ENCODE measurements at regions of chr5 and their contacts with region 1.

Region 1: GRCh38 chr5:146474065-146474464 is 26.9 kb downstream of the TCERG1 start:
- DNase-seq: no peak
- CTCF ChIP-seq: no peak

Region 2: DNA sequence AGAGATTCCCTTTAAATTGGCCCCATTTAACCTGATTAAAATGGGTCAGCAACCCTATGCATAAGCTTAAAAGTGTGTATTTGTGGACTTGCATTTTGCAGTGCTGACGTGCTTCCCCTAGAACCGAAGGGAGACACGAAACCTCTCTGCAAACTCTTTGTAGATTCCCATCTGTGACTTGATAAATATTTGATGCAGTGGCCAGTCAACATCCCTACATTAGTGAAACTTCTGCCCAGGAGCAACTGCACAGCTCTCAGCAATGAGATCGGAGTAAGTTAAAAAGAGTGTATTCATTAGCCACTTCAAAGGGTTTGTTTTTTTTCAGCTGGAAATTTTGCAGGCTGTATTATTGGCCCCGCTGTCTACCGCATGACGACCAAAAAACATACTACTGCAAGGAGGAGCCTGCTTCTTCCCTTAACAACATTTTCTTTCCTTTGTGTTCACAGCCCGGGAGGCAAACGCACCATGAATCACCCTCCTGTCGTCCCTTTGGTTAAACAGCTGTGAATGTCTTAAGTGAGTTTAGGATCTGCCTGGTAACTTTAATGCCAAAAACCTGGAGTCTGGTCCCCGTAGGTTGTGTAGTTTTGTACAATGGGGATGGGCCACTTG is 64.9 kb before region 1 on chr5:
- CTCF ChIA-PET with region 1: no interaction called
- POLR2A ChIA-PET with region 1: no interaction called
- DNase-seq: no peak
- CTCF ChIP-seq: no peak

Region 3: GRCh38 chr5:146458894-146459293 is 15.2 kb before region 1 on chr5:
- CTCF ChIA-PET with region 1: interaction called, 10 read pairs
- POLR2A ChIA-PET with region 1: no interaction called
- DNase-seq: no peak
- CTCF ChIP-seq: no peak

Region 4: GRCh38 chr5:146499680-146500079 is 25.6 kb after region 1 on chr5:
- CTCF ChIA-PET with region 1: no interaction called
- POLR2A ChIA-PET with region 1: no interaction called
- DNase-seq: no peak
- CTCF ChIP-seq: no peak